Panc1 (cell line): ENCODE measurements at regions of chrX and their contacts with region 1.

Region 1: DNA sequence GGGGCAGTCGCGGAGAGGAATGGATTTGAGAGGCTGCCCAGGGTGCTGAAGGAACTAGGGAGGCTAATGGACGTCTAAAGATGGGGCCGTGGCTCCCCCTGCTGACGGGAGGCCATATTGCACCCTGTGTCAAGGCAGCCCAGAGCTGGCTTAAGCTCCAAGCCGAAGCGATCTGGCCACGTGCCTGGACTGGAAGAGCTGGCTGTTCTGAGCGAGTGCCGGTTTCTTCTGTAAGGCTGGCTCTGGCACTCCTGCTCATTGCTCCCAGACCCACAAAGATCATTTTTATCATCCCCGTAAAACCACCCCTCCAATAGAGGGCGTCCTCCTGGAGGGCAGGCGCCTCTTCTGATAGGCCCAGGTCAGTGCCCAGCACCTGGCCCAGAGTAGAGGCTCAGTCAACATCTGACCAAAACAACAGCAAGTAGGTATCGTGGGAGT is 5.6 kb downstream of the PNCK start:
- DNase-seq: peak; percentile 56
- ATAC-seq: peak; percentile 90
- H3K4me3 ChIP-seq: peak overlapping the region; percentile 19 to 42
- H3K27ac ChIP-seq: no peak overlapping the region
- H3K4me1 ChIP-seq: no peaks in the 10 kb centered on the region
- H3K27me3 ChIP-seq: no peaks in the 10 kb centered on the region
- CTCF ChIP-seq: peak; percentile 92

Region 2: DNA sequence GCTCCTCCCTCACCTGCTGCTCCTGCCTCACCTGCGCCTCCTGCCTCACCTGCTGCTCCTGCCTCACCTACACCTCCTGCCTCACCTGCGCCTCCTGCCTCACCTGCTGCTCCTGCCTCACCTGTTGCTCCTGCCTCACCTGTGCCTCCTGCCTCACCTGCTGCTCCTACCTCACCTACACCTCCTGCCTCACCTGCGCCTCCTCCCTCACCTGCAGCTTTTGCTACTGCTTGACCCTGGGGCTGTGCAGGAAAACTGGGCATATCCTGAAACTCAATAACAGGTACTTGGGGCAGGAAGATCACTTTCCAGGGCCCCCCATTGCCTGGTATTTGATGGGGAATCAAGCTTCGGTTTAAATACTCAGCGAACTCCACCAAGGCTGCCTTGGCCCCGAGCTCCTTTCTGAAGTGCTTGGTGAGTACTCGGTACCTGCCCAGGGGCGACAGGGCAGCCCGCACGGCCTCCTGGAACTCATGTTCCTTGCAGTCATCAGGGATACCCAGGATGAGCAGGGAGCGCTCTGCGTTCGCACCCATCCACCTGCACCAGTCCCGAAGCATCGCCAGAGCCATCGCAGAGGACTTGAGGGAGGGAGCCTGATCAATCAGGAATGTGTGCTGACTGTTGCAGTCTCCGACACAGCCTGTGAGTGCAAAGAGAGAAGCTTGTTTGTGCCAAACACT is 269.6 kb before region 1 on chrX:
- CTCF ChIA-PET with region 1: interaction called, 10 read pairs
- POLR2A ChIA-PET with region 1: no interaction called
- in situ Hi-C with region 1: no loop called
- intact Hi-C with region 1: no loop called
- DNase-seq: no peak
- ATAC-seq: no peak
- H3K4me3 ChIP-seq: no peak overlapping the region
- H3K27ac ChIP-seq: no peak overlapping the region
- H3K4me1 ChIP-seq: no peaks in the 10 kb centered on the region
- H3K27me3 ChIP-seq: peaks cover 2% of the 10 kb centered on the region; the same call in 1 of the 2 replicates
- CTCF ChIP-seq: no peak

Region 3: DNA sequence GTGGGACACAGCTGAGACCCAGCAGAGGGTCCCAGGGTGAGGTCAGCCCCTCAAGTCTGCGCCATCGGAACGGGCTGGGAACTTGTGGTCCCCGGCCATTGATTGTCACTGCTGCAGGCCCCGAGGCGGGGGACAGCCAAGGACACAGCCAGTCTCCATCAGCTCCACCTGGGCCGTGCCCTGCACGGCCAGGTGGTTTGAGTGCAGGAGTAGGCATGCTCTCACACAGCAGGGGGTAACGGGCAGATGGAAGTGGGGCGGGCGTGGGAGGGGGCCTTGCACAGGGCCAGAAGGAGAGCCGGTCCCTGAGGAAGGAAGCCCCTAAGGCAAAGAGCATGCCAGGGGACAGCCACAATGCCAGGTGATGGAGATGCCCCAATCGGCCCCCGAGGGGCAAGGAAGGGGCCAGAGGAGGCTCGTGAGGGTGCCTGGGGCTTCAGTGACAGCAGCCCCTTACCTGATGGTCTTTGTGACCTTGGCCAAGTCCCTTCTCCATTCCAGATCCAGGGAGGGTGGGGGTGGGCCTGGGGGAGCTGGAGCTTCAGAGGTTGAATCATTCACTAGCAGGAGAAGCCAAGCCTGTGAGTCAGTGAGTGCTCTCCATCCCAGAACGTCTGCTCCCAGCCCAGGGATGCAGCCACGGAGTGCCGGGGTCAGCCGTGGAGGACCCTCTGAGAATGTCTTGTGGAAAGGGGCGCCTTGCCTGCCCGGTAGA is 148.2 kb before region 1 on chrX:
- CTCF ChIA-PET with region 1: interaction called, 10 read pairs
- POLR2A ChIA-PET with region 1: no interaction called
- in situ Hi-C with region 1: no loop called
- intact Hi-C with region 1: no loop called
- DNase-seq: no peak
- ATAC-seq: peak; percentile 73
- H3K4me3 ChIP-seq: no peak overlapping the region
- H3K27ac ChIP-seq: no peak overlapping the region
- H3K4me1 ChIP-seq: peaks cover 12% of the 10 kb centered on the region
- H3K27me3 ChIP-seq: no peaks in the 10 kb centered on the region; the same call in 1 of the 2 replicates
- CTCF ChIP-seq: no peak

Region 4: GRCh38 chrX:153539171-153539978 is 128.6 kb before region 1 on chrX:
- CTCF ChIA-PET with region 1: interaction called, 21 read pairs
- POLR2A ChIA-PET with region 1: no interaction called
- in situ Hi-C with region 1: no loop called
- intact Hi-C with region 1: loop called (anchors 5 kb)
- DNase-seq: peak; percentile 28
- ATAC-seq: peak; percentile 94
- H3K4me3 ChIP-seq: no peak overlapping the region
- H3K27ac ChIP-seq: no peak overlapping the region
- H3K4me1 ChIP-seq: no peaks in the 10 kb centered on the region; the same call in 1 of the 2 replicates
- H3K27me3 ChIP-seq: no peaks in the 10 kb centered on the region
- CTCF ChIP-seq: no peak

Region 5: GRCh38 chrX:153554519-153555167 is 113.3 kb before region 1 on chrX:
- CTCF ChIA-PET with region 1: interaction called, 6 read pairs
- POLR2A ChIA-PET with region 1: no interaction called
- in situ Hi-C with region 1: no loop called
- intact Hi-C with region 1: loop called (anchors 1 kb)
- DNase-seq: peak; percentile 24
- ATAC-seq: peak; percentile 90
- H3K4me3 ChIP-seq: no peak overlapping the region
- H3K27ac ChIP-seq: no peak overlapping the region
- H3K4me1 ChIP-seq: no peaks in the 10 kb centered on the region
- H3K27me3 ChIP-seq: no peaks in the 10 kb centered on the region
- CTCF ChIP-seq: no peak

Region 6: DNA sequence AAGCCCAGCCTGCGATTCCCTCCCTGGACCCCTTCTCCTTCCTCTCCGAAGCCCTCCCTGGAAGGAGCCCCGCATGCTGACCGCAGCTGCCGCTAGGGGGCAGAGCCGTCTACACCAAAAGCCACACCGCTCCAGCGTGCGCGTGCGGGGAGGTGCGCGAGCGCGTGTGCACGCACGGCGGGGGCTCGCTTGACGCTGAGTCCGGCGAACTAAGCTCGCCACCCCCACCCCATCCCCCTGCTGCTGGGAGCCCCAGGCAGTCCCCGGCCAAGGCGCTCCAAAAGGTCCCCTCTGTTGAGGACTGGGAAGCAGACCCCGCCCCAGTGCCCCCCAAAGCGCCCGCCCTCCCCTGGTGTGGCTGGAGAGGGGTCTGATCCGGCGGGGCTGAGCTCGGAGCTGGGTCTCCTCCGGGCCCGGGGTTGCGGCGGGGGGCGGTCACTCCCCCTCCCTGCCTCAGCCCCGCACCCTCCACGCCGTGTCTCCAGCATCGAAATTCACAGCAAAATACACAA is 58.0 kb before region 1 on chrX:
- CTCF ChIA-PET with region 1: interaction called, 4 read pairs
- POLR2A ChIA-PET with region 1: no interaction called
- in situ Hi-C with region 1: no loop called
- intact Hi-C with region 1: loop called (anchors 5 kb)
- DNase-seq: no peak
- ATAC-seq: peak; percentile 96
- H3K4me3 ChIP-seq: peak overlapping the region; percentile 18 to 29
- H3K27ac ChIP-seq: no peak overlapping the region
- H3K4me1 ChIP-seq: no peaks in the 10 kb centered on the region
- H3K27me3 ChIP-seq: peaks cover 4% of the 10 kb centered on the region
- CTCF ChIP-seq: peak; percentile 90

Region 7: GRCh38 chrX:153643431-153644351 is 24.3 kb before region 1 on chrX:
- CTCF ChIA-PET with region 1: interaction called, 13 read pairs
- POLR2A ChIA-PET with region 1: no interaction called
- in situ Hi-C with region 1: no loop called
- intact Hi-C with region 1: no loop called
- DNase-seq: no peak
- ATAC-seq: peak; percentile 54
- H3K4me3 ChIP-seq: peak overlapping the region; percentile 33 to 46
- H3K27ac ChIP-seq: no peak overlapping the region
- H3K4me1 ChIP-seq: peaks cover 7% of the 10 kb centered on the region
- H3K27me3 ChIP-seq: peaks cover 4% of the 10 kb centered on the region
- CTCF ChIP-seq: peak; percentile 69; the same call in 1 of the 2 replicates